ENCODE measurements at regions of chr5 and their contacts with region 1.

Region 1: GRCh38 chr5:157471709-157472108 is 11.7 kb downstream of the NIPAL4 start:
- DNase-seq: peak; percentile 49
- H3K4me3 Mint-ChIP-seq: no peak overlapping the region
- H3K27ac Mint-ChIP-seq: no peak overlapping the region
- H3K4me1 Mint-ChIP-seq: no peaks in the 10 kb centered on the region
- H3K27me3 Mint-ChIP-seq: no peaks in the 10 kb centered on the region

Region 2: GRCh38 chr5:157342822-157343402 is 128.8 kb before region 1 on chr5:
- CTCF ChIA-PET with region 1: interaction called, 19 read pairs
- intact Hi-C with region 1: no loop called
- DNase-seq: peak; percentile 51
- H3K4me3 Mint-ChIP-seq: no peak overlapping the region
- H3K27ac Mint-ChIP-seq: no peak overlapping the region
- H3K4me1 Mint-ChIP-seq: peaks cover 38% of the 10 kb centered on the region
- H3K27me3 Mint-ChIP-seq: no peaks in the 10 kb centered on the region

Region 3: GRCh38 chr5:157548513-157549297 is 77.0 kb after region 1 on chr5:
- CTCF ChIA-PET with region 1: no interaction called
- intact Hi-C with region 1: no loop called
- DNase-seq: no peak
- H3K4me3 Mint-ChIP-seq: no peak overlapping the region
- H3K27ac Mint-ChIP-seq: no peak overlapping the region
- H3K4me1 Mint-ChIP-seq: peaks cover 33% of the 10 kb centered on the region
- H3K27me3 Mint-ChIP-seq: peaks cover 2% of the 10 kb centered on the region

Region 4: DNA sequence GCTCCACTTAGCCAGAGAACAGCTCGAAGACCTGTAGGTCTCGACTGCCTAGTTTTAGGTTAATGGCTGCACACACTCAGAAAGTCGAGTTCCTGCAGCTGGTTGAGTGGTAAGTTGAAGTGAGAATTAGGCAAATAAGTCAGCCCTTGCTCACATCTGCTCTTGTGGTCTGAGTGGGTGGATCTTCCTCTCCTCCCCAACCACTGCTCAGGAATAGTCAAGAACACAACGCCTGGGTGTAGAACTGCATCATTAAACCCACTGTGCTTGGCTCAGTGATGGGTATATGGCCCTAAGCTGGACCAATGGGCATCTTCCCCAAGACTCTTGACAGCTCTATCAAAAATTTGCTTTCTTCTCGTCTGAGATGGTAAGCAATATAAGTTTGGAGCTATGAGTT is 124.8 kb after region 1 on chr5:
- CTCF ChIA-PET with region 1: no interaction called
- intact Hi-C with region 1: no loop called
- DNase-seq: peak; percentile 84
- H3K4me3 Mint-ChIP-seq: peak overlapping the region; percentile 13
- H3K27ac Mint-ChIP-seq: peak overlapping the region; percentile 92
- H3K4me1 Mint-ChIP-seq: peaks cover 96% of the 10 kb centered on the region
- H3K27me3 Mint-ChIP-seq: no peaks in the 10 kb centered on the region

Region 5: DNA sequence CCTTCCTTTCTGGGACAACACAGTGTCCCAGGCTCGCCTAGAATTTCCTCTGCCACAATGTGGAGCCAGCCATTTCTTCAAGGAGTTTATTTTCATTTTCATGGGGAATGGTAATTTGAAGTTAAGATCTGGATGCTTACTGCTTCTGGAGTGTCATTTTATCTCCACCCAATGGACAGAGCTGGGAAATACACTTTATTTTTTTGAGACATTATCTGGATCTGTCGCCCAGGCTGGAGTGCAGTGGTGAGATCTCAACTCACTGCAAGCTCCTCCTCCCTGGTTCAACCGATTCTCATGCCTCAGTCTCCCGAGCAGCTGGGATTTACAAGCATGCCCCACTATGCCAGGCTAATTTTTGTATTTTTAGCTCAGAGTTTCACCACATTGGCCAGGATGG is 246.8 kb after region 1 on chr5:
- CTCF ChIA-PET with region 1: interaction called, 14 read pairs
- intact Hi-C with region 1: no loop called
- DNase-seq: no peak
- H3K4me3 Mint-ChIP-seq: no peak overlapping the region
- H3K27ac Mint-ChIP-seq: no peak overlapping the region
- H3K4me1 Mint-ChIP-seq: peaks cover 25% of the 10 kb centered on the region
- H3K27me3 Mint-ChIP-seq: no peaks in the 10 kb centered on the region